Psoas muscle (tissue), 8 donors: ENCODE measurements at regions of chr5 and their contacts with region 1.

Region 1: GRCh38 chr5:122790354-122791103 is 15.6 kb downstream of the SNX2 start:
- DNase-seq: no peak
- ATAC-seq: no peak
- H3K4me3 ChIP-seq: no peak overlapping the region
- H3K27ac ChIP-seq: no peak overlapping the region
- H3K4me1 ChIP-seq: no peaks in the 10 kb centered on the region
- H3K27me3 ChIP-seq: no peaks in the 10 kb centered on the region
- CTCF ChIP-seq: no peak

Region 2: DNA sequence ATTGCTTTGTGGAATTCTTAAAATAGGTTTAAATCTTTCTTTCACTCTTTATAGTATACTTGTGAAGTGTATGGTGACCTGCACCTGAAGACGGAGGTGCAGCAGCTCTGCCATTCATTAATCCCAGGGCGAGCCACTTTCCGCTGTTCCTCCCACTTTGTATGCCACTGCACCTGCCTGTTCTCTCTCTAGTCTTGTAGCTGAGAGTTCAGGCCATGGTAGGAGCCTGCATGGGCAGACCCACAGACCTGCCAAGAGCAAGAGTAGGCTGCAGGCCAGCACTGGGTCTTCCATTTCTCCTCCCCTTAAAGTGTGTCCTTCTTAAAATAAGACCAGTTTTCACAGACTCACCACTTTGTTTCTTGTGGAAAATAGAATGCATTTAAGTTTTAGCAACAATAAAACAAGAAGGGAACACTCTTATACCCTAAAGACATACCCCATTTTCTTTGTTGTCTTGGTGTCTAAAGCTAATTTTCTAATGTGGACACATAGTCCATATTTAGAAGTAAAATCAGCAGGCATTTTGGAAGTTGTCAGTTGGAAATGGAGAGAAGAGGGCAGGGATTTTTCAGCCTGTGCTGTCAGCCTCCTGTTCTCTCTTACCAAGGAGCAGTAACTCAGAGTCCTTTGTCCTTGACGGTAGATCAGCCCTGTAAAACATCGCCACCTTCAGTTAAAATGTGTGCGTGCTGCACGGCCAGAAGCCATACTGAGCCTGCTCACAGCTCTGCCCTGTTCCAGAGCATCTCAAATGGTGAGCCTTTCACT is 375.3 kb before region 1 on chr5:
- intact Hi-C with region 1: no loop called
- DNase-seq: peak; percentile 20 to 46
- ATAC-seq: no peak
- H3K4me3 ChIP-seq: no peak overlapping the region
- H3K27ac ChIP-seq: no peak overlapping the region
- H3K4me1 ChIP-seq: no peaks in the 10 kb centered on the region
- H3K27me3 ChIP-seq: no peaks in the 10 kb centered on the region
- CTCF ChIP-seq: peak; percentile 32

Region 3: GRCh38 chr5:122831984-122832383 is 41.5 kb after region 1 on chr5:
- intact Hi-C with region 1: loop called in 1 of 2 experiments (anchors 5 kb)
- DNase-seq: no peak
- ATAC-seq: no peak
- H3K4me3 ChIP-seq: no peak overlapping the region
- H3K27ac ChIP-seq: no peak overlapping the region
- H3K4me1 ChIP-seq: no peaks in the 10 kb centered on the region
- H3K27me3 ChIP-seq: no peaks in the 10 kb centered on the region
- CTCF ChIP-seq: no peak

Region 4: DNA sequence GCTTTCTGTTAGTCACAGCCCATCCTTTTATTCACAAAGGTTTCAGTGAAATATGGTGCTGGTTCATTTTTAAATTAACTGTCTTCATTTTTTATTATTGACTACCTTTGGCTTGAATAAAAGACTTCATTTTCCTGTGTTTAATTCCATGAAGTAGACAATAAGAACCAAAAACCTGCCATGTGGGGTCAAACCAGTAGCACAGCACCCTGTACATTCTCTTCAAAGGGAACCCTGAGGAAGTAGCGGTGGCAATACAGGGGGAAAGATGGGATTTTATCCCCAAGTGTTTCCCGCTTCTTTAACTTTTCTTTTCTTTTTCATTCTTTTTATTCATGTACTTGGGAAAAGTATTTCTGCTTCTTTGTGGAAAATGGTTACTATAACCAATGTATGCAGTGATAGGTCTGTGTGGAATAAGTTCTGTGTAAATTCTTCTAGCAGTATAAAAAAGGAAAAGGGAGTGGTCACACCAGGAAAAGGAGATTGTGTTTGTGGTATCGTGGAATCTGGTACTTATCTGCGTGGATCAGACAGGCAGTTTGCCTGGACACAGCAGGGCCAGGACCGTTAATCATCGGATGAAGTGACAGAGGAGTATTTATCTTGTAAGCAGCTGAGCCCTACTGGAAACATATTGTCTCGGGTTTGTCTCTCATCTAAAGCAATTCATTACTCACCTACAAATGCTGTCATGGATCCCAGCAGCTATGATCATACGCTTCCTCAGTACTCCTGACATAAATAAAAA is 151.8 kb after region 1 on chr5:
- intact Hi-C with region 1: no loop called
- DNase-seq: no peak
- ATAC-seq: peak in 3 of 4 donors; percentile 27 to 67 (median 57)
- H3K4me3 ChIP-seq: no peak overlapping the region
- H3K27ac ChIP-seq: no peak overlapping the region
- H3K4me1 ChIP-seq: peaks cover 10% of the 10 kb centered on the region
- H3K27me3 ChIP-seq: no peaks in the 10 kb centered on the region
- CTCF ChIP-seq: no peak